PC-3 (cell line): ENCODE measurements at regions of chr6 and their contacts with region 1.

Region 1: DNA sequence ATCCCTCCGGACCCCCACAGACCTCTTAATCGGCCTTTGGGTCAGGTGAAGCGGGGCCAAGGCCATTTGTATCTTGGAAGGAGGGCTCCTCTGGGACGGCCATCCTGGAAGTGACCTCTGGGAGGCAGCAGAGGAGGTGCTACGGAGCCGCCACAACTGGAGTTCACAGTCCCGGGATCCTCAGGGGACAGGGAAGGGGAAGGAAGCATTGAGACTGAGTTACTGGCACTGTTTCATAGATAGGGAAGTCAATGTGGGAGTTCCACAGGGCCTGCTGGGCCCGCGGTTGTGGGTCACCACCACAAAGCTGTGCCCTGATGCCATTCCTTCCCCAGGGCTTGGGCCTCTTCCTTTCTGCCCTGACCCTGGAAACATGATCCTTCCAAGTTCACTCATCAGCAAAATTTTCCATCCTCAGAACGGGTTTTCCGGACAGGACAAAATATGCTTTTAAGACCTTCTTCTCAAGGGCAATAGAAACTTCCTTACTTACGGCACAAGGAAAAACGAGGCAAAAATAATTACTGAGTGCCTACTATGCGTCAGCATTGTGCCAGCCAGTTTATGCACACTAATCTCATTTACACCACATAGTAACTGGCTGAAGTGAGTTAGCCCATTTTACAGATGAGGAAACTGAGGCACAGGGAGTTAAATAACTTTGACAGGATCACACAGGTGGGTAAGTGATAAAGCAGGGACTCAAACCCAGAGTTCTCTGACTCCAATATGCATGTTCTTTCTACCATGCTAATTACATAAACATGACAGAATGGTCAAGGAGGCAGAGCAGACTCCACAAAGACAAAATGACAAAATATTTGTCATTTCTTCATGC is 143.8 kb downstream of the UNC5CL start:
- DNase-seq: peak; percentile 74
- ATAC-seq: peak; percentile 99
- H3K4me3 ChIP-seq: no peak overlapping the region
- H3K27ac ChIP-seq: no peak overlapping the region
- H3K4me1 ChIP-seq: no peaks in the 10 kb centered on the region
- H3K27me3 ChIP-seq: 0 out of 2 replicates have a peak, but pooled peaks cover 4% of the 10 kb centered on the region
- CTCF ChIP-seq: peak; percentile 86

Region 2: DNA sequence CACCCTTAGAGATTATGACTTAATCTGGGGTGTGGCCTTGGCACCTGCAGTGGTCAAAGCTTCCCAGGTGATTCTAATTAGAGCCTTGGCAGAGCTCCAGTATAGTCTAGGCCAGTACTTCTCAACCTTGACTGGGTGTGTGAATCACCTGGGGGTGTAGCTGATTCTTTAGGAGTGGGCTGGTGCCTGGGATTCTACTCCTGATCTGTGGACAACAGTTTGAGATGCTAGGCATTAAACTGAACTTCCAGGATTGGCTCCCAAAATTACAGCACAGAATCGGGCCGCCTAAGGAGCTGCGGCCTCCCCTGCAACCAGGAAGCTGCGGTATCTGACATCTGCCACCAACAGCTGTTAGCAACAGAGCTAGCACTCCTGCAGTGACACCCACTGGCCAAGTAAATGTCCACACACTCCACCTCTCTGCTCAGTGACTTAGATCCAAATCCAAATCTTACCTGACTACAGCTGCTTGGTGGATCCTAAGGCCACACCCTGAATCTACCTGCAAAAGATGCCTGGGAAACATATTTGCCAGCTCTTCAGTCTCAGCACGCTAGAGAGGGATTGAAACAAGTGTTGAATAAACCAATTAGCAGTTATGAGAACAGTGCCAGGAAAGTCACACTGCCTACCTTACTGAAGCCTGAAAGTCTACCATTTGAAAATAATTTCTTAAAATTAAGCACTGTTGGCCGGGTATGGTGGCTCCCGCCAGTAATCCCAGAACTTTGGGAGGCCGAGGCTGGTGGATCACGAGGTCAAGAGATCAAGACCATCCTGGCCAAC is 17.2 kb after region 1 on chr6:
- CTCF ChIA-PET with region 1: interaction called, 5 read pairs
- POLR2A ChIA-PET with region 1: no interaction called
- intact Hi-C with region 1: loop called (anchors 1 kb)
- DNase-seq: peak; percentile 63
- ATAC-seq: peak; percentile 70
- H3K4me3 ChIP-seq: no peak overlapping the region
- H3K27ac ChIP-seq: no peak overlapping the region
- H3K4me1 ChIP-seq: peaks cover 12% of the 10 kb centered on the region
- H3K27me3 ChIP-seq: no peaks in the 10 kb centered on the region
- CTCF ChIP-seq: peak; percentile 74

Region 3: GRCh38 chr6:40978687-40979289 is 83.6 kb after region 1 on chr6:
- CTCF ChIA-PET with region 1: no interaction called
- POLR2A ChIA-PET with region 1: no interaction called
- intact Hi-C with region 1: loop called (anchors 1 kb)
- DNase-seq: no peak
- ATAC-seq: no peak
- H3K4me3 ChIP-seq: no peak overlapping the region
- H3K27ac ChIP-seq: no peak overlapping the region
- H3K4me1 ChIP-seq: no peaks in the 10 kb centered on the region
- H3K27me3 ChIP-seq: 0 out of 2 replicates have a peak, but pooled peaks cover 8% of the 10 kb centered on the region
- CTCF ChIP-seq: no peak

Region 4: GRCh38 chr6:41027799-41028628 is 132.8 kb after region 1 on chr6:
- CTCF ChIA-PET with region 1: interaction called, 13 read pairs
- POLR2A ChIA-PET with region 1: no interaction called
- intact Hi-C with region 1: loop called (anchors 1 kb)
- DNase-seq: peak; percentile 87
- ATAC-seq: peak; percentile 84
- H3K4me3 ChIP-seq: peak overlapping the region; percentile 69
- H3K27ac ChIP-seq: peak overlapping the region; percentile 31; the same call in 1 of the 2 replicates
- H3K4me1 ChIP-seq: peaks cover 28% of the 10 kb centered on the region
- H3K27me3 ChIP-seq: no peaks in the 10 kb centered on the region
- CTCF ChIP-seq: peak; percentile 98

Region 5: GRCh38 chr6:41066867-41067304 is 171.7 kb after region 1 on chr6:
- CTCF ChIA-PET with region 1: no interaction called
- POLR2A ChIA-PET with region 1: no interaction called
- intact Hi-C with region 1: loop called (anchors 1 kb)
- DNase-seq: peak; percentile 81
- ATAC-seq: peak; percentile 23
- H3K4me3 ChIP-seq: no peak overlapping the region
- H3K27ac ChIP-seq: no peak overlapping the region
- H3K4me1 ChIP-seq: peaks cover 10% of the 10 kb centered on the region
- H3K27me3 ChIP-seq: no peaks in the 10 kb centered on the region
- CTCF ChIP-seq: peak; percentile 90